CD14-positive monocyte (primary cell): ENCODE measurements at regions of chr3 and their contacts with region 1.

Region 1: DNA sequence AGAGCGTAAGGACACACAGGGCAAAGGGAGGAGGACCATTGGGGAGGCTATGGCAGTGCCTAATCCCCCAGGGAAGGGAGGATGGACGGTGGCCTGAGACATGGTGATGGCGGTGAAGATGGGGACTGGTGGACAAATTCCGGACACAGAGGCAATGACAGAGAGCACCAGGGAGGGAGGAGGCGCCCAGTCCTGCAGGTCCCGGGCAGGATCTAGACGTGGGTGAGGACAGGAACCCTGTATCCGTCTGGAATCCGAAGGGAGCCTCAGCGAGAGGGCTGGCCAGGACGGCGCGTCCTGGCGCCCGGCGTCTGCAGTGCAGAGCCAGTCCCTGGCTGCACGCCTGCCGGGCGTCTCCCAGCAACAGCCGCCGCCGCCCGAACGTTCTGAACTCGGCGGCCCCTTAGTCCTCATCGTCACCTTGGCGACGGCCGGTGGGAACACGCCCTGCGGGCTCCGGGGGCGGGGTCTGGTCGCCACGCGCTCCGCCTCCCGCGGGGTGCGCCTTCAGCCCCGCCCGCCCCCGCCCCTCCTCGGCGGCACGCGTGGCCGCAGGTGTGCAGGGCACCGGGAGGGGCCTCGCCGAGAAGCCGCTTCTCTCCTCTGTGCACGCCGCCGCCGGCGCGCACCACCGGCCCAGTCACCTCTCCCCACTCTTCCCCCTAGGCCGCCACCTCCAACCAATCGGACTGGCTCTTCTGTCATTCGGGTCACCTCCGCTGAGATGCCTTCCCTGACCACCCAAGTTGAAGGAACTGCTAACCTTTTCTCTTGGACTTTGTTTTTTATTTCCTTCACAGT is 11.6 kb downstream of the XIRP1 start:
- DNase-seq: peak; percentile 70 to 77 (median 73)
- H3K4me3 ChIP-seq: peak overlapping the region; percentile 15 to 76 (median 29)
- H3K4me3 Mint-ChIP-seq: peak overlapping the region; percentile 71 to 94
- H3K27ac ChIP-seq: no peak overlapping the region
- H3K27ac Mint-ChIP-seq: peak overlapping the region in 6 of 7 donors; percentile 31 to 87 (median 66)
- H3K4me1 ChIP-seq: peaks cover 24 to 31% of the 10 kb centered on the region in 2 donors
- H3K4me1 Mint-ChIP-seq: peaks cover 31% of the 10 kb centered on the region
- H3K27me3 ChIP-seq: peaks cover 5 to 8% of the 10 kb centered on the region in 2 donors
- H3K27me3 Mint-ChIP-seq: peaks cover 13 to 19% (median 19%) of the 10 kb centered on the region in 3 donors
- CTCF ChIP-seq: no peak

Region 2: DNA sequence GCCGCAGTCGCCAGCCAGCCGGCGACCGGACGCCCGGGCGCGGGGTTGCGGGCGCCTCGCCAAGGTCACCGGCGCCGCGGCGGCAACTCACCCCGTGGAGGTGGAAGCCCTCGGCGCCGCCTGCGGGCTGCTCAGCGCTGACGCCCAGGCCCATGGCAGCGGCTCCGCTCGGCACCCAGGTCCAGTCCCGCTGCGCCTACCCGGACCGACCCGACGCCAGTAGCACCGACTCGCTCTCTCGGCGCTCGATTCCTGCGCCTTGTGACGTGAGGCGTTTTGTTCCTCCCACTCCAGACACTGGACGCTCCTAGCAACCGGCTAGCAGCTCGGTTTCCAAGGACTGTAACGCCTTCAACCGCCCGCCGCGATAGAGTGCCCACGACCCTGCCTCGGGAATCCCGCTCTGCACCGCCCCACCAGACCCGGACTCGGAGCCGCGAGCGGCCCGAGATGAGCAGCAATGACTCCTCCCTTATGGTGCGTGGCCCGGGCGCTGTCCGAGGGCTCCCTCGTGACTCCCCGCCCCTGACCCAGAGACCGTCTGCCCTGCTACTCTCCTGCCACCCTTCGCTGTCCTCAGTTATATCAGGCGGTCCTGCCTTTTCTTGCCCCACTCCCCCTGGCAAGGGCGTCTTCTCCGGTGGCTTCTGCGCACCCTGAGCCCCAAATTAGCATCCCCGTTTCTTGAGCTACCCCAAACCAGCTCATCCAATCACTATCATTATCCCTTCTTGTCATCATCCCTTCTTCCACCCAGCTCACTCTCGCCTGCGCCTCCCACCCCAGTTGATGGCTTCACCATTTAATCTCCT is 73.2 kb before region 1 on chr3 and contains the starts of genes GORASP1 and TTC21A:
- intact Hi-C with region 1: loop called (anchors 5 kb)
- DNase-seq: peak; percentile 71 to 82 (median 78)
- H3K4me3 ChIP-seq: peak within 1 kb of the TSS; percentile 64 to 85 (median 81)
- H3K4me3 Mint-ChIP-seq: peak within 1 kb of the TSS; percentile 96
- H3K27ac ChIP-seq: peak within 1 kb of the TSS; percentile 64 to 82
- H3K27ac Mint-ChIP-seq: peak within 1 kb of the TSS; percentile 89 to 98 (median 95)
- H3K4me1 ChIP-seq: peaks cover 29 to 42% of the 10 kb centered on the region in 2 donors
- H3K4me1 Mint-ChIP-seq: peaks cover 54% of the 10 kb centered on the region
- H3K27me3 ChIP-seq: no peaks in the 10 kb centered on the region
- H3K27me3 Mint-ChIP-seq: peaks cover 5 to 16% (median 12%) of the 10 kb centered on the region in 3 donors
- CTCF ChIP-seq: no peak
- polyA plus RNA-seq, gene GORASP1: 23.2 to 105 (median 31.2) TPM
- polyA plus RNA-seq, gene TTC21A: 0.67 to 12.9 (median 2.2) TPM

Region 3: DNA sequence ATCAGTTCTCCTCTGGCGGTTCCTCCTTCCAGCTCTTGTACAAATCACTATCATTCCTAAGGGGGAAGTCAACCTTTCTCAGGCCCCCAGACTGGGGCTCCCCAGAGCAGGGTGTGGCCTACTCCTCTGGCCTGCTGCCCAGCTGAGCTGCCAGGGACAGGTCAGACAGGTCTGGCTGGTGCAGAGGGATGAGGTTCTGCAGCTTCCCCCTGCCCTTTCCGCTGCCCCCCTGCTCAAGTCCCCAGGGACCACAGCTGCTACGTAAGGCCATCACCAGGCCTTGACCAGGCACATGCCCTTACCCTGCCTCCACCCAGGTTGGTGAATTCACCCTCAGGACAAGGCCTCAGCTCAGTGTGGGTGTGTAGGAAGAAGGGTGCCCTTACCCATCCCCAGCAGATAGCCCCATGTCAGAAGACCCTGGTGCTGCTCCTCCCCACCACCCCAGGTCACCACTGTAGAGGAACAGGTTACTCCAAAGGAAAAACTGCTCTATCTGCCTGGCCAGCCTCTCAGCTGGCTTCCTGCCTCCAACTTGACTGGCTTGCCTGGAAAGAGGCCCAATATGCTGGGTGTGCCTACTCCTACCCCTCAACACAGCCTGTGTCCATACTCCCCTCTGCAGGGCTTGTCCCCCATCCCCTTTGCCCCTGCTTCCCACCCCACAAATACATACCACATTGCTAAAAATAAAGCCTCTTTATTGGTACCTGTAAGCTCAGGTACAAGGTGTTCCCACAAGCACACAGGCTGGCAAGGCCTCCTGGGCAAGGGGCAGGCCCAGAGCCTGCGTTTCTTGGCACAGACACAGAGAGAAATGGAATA is 39.4 kb before region 1 on chr3:
- intact Hi-C with region 1: loop called (anchors 5 kb)
- DNase-seq: peak; percentile 73 to 86 (median 82)
- H3K4me3 ChIP-seq: peak overlapping the region in 1 of 3 experiments; percentile 42
- H3K4me3 Mint-ChIP-seq: peak overlapping the region; percentile 40 to 43
- H3K27ac ChIP-seq: peak overlapping the region; percentile 59 to 64
- H3K27ac Mint-ChIP-seq: peak overlapping the region; percentile 82 to 93 (median 86)
- H3K4me1 ChIP-seq: peaks cover 38 to 51% of the 10 kb centered on the region in 2 donors
- H3K4me1 Mint-ChIP-seq: peaks cover 48% of the 10 kb centered on the region
- H3K27me3 ChIP-seq: no peaks in the 10 kb centered on the region
- H3K27me3 Mint-ChIP-seq: no peaks in the 10 kb centered on the region
- CTCF ChIP-seq: no peak

Region 4: DNA sequence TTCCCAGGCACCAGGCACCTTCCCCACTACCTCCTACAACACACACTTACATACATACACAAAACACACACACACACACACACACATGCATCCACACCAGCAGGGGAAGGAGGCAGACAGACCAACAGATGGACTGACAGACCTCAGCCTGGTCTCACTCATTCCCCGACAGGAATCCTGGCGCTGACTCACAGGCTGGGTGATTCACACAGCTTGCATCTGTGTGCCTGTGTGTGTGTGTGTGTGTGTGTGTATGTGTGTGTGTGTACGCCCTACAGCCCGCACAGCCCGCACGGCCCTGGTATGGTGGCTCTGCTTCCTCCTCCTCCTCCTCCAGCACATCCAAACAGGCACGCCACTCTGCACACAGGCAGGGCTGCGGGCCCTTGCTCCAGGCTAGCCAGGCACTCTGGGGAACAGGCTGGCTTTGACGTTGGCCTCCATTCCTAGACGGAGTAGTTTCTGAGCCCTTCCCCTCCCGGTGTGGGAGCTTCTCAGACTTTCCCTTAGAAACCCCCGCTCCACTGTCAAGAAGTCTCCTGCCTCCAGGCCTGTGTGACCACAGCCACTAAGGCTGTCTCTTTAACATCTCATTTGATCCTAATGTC is 33.7 kb before region 1 on chr3:
- intact Hi-C with region 1: loop called (anchors 5 kb)
- DNase-seq: peak; percentile 94 to 97 (median 95)
- H3K4me3 ChIP-seq: peak overlapping the region; percentile 4 to 83 (median 20)
- H3K4me3 Mint-ChIP-seq: peak overlapping the region; percentile 98 to 100
- H3K27ac ChIP-seq: peak overlapping the region; percentile 93 to 97
- H3K27ac Mint-ChIP-seq: peak overlapping the region; percentile 94 to 99 (median 96)
- H3K4me1 ChIP-seq: peaks cover 73 to 83% of the 10 kb centered on the region in 2 donors
- H3K4me1 Mint-ChIP-seq: peaks cover 76% of the 10 kb centered on the region
- H3K27me3 ChIP-seq: no peaks in the 10 kb centered on the region
- H3K27me3 Mint-ChIP-seq: peaks cover 0 to 3% (median 0%) of the 10 kb centered on the region in 3 donors
- CTCF ChIP-seq: no peak